Ascending aorta (tissue), 2 donors: ENCODE measurements at regions of chr2 and their contacts with region 1.

Region 1: GRCh38 chr2:17753803-17754663 is at the starts of genes GEN1 and SMC6:
- DNase-seq: peak; percentile 38 to 92
- H3K4me3 ChIP-seq: peak within 1 kb of the TSS; percentile 94 to 99
- H3K27ac ChIP-seq: peak within 1 kb of the TSS; percentile 96 to 97
- H3K4me1 ChIP-seq: peaks cover 0 to 10% of the 10 kb centered on the region in 2 donors
- H3K27me3 ChIP-seq: no peaks in the 10 kb centered on the region
- CTCF ChIP-seq: no peak
- total RNA-seq, gene GEN1: not detected
- total RNA-seq, gene SMC6: 6.2 TPM

Region 2: GRCh38 chr2:17518212-17519154 is 235.6 kb before region 1 on chr2 and contains the start of gene RAD51AP2:
- intact Hi-C with region 1: loop called (anchors 1 kb)
- DNase-seq: peak; percentile 16 to 86
- H3K4me3 ChIP-seq: peak within 1 kb of the TSS; percentile 42 to 61
- H3K27ac ChIP-seq: peak within 1 kb of the TSS in 1 of 2 donors; percentile 20
- H3K4me1 ChIP-seq: peaks cover 0 to 3% of the 10 kb centered on the region in 2 donors
- H3K27me3 ChIP-seq: no peaks in the 10 kb centered on the region
- CTCF ChIP-seq: no peak
- total RNA-seq, gene RAD51AP2: not detected

Region 3: DNA sequence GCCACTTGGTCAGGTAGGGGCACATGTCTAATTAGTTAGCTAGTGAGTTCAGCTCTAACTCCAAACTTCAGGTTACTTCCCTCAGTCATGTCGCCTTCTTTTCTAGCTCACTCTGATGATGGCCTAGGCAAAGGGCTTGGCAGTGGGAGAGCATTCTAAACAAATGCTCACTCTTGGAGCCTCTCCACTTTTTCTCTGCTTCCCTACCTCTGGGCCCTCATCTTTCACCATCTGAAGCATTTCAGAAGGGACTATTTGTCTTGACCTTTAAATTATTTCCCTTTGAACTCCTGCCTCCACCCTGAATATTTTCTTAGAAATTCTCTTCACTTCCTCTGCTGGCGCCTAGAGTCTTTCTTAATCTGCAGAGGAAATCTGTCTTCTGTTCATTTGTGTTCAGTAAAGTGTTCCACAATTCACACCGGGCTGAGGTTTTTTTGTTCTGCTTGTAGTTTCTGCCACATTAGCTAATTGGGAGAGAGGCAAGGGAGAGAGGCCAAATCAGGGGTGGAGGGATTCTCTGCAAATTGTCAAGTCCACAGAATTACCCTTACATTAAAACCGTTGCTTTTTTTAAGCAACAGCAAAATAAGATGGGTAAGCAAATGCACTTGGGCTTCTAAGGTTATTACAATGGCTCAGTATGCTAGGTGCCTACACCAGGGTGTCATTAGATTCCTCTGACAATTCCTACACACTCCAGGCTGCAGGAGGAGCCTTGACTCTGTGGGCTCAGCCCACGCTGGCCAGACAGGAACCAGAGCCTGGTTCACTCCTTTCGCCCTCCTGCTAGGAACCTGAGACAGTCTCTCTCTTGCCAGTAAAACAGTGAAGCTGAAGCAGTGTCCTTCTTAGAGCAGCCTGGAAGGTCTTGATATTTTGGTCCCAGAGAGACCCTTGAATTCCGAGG is 67.8 kb after region 1 on chr2:
- intact Hi-C with region 1: loop called (anchors 5 kb)
- DNase-seq: no peak
- H3K4me3 ChIP-seq: peak overlapping the region in 1 of 2 donors; percentile 13
- H3K27ac ChIP-seq: peak overlapping the region; percentile 40 to 55
- H3K4me1 ChIP-seq: peaks cover 0 to 27% of the 10 kb centered on the region in 2 donors
- H3K27me3 ChIP-seq: no peaks in the 10 kb centered on the region
- CTCF ChIP-seq: no peak

Region 4: DNA sequence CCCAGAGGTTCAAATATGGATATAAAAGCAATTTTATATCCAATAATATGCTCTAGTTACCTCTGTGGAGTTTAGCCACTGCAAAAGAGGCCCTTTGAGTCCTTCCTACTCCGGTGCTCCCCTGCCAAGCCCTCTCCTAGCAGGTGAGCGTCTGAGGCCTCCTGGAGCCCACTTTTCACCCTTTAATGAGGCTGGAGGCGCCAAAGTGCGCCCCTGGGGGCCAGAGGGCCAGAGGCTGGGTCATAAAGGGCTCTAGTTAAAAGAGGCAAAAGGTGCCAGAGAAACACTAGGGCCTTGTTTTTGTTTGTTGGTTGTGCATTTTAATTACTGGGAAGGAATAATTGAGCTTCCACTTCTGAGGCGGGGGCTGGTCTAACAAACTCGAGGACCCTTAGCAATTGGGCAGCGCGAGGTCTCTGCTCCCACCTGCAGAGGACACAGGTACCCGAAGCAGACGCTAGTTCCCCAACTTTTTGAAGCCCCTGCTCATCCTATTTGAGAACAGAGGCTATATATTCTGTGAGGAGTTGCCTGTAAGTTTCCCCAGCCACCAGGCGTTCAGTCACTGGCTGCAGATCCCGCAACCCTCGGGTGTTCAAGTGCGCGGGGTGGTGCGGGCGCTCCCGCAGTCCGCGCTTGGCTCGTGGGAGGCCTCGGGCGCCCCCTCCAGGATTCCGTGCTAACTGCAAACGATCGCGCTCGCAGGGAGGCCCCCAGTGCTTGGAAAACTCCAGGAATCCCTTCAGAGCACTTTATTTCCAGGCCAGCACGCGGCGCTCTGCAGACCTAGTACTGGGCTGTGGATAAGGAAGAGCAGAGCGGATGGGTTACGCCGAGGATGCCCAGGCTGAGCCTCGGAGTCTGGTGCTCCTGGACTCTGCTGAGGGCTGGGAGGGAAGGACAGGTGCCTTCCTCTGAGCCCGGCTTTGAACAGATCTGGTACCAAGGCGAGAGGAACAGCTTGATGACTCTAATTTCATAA is 76.3 kb after region 1 on chr2:
- intact Hi-C with region 1: loop called (anchors 2 kb)
- DNase-seq: peak in 1 of 2 donors; percentile 79
- H3K4me3 ChIP-seq: peak overlapping the region in 1 of 2 donors; percentile 47
- H3K27ac ChIP-seq: no peak overlapping the region
- H3K4me1 ChIP-seq: peaks cover 0 to 3% of the 10 kb centered on the region in 2 donors
- H3K27me3 ChIP-seq: no peaks in the 10 kb centered on the region
- CTCF ChIP-seq: peak; percentile 74 to 96 (median 80)

Region 5: DNA sequence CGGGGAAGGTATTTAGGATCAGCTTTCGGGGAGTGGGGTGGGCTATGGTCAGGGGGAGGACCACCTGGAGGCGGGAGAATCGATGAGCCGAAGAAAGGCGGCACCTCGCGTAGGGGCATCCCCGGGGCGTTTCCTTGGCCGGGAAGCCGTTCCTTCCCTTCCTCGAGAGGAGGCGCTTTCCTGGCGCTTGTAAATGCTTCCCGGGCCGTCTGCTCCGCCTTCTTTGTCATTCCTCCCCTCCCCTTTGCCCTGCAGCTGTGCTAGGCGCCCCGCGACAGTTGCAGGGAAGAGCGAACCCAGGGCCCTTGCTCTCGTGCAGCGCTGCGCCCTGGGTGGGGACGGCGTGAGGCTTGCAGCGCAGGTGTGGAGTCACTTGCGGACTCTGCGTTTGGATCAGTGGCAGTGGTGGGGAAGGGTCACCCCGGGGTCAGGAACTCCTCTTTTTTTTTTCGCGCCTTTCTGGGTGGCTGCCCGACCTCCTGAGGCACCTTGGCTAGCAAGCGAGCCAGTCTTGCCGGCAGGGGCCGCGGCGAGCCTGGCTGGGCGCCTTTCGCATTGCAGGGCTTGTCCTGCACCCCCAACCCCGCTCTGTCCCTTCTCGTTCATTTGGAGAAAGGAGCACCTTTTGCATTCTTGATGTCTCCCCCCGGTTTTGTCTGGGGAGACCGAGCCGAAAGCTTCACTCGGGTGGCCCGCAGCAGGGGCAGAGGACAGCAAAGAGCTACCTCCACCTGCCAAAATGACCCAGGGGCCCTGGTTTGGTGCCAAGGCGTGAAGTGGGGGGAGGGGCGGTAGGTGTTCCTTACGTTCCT is 125.3 kb after region 1 on chr2:
- intact Hi-C with region 1: loop called (anchors 2 kb)
- DNase-seq: peak in 1 of 2 donors; percentile 84
- H3K4me3 ChIP-seq: peak overlapping the region; percentile 79 to 93
- H3K27ac ChIP-seq: peak overlapping the region; percentile 64 to 81
- H3K4me1 ChIP-seq: peaks cover 0 to 7% of the 10 kb centered on the region in 2 donors
- H3K27me3 ChIP-seq: no peaks in the 10 kb centered on the region
- CTCF ChIP-seq: peak; percentile 13 to 40 (median 24)

Region 6: GRCh38 chr2:17976871-17977746 is 223.1 kb after region 1 on chr2:
- intact Hi-C with region 1: loop called (anchors 10 kb)
- DNase-seq: peak; percentile 13 to 85
- H3K4me3 ChIP-seq: peak overlapping the region in 1 of 2 donors; percentile 14
- H3K27ac ChIP-seq: peak overlapping the region; percentile 67 to 84
- H3K4me1 ChIP-seq: peaks cover 0 to 23% of the 10 kb centered on the region in 2 donors
- H3K27me3 ChIP-seq: no peaks in the 10 kb centered on the region
- CTCF ChIP-seq: no peak